ENCODE measurements at regions of chr10 and their contacts with region 1.

Region 1: DNA sequence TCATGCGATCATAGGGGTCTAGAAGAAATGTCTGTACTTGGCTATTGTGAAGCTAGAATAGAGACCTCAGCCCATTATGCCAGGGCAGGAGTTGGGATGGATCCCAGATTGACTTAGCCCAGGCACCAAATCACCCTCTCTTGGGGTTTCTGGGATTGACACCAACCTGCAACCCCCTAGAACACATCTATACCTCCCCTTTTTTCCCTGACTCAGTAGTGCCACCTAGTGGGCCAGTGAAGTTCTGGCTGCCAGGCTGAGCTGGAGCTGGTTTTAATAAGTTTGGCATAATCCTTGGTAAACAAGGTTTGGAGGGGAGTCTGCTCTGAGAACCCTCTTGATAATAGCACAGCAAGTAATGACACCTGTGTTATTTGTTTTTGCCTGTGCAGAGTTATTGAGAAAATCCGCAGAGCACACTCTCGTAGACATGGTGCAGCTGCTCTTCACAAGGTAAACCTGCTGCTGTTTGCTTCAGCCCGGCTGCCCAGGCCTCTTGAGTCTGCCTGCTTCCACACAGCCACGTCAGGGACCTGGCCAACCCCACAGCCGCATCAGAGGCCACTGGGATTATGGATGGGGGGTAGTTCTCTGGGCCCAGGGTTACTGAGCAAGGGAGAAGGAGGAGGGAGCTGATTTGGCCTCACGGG is 43.3 kb upstream of the NFKB2 start:
- DNase-seq: peak; percentile 73
- H3K4me3 Mint-ChIP-seq: no peak overlapping the region
- H3K27ac Mint-ChIP-seq: no peak overlapping the region
- H3K4me1 Mint-ChIP-seq: peaks cover 4% of the 10 kb centered on the region
- H3K27me3 Mint-ChIP-seq: no peaks in the 10 kb centered on the region

Region 2: GRCh38 chr10:102237711-102238252 is 114.4 kb before region 1 on chr10:
- CTCF ChIA-PET with region 1: interaction called, 593 read pairs
- POLR2A ChIA-PET with region 1: interaction called, 3 read pairs
- DNase-seq: no peak
- H3K4me3 Mint-ChIP-seq: no peak overlapping the region
- H3K27ac Mint-ChIP-seq: no peak overlapping the region
- H3K4me1 Mint-ChIP-seq: peaks cover 17% of the 10 kb centered on the region
- H3K27me3 Mint-ChIP-seq: peaks cover 53% of the 10 kb centered on the region

Region 3: DNA sequence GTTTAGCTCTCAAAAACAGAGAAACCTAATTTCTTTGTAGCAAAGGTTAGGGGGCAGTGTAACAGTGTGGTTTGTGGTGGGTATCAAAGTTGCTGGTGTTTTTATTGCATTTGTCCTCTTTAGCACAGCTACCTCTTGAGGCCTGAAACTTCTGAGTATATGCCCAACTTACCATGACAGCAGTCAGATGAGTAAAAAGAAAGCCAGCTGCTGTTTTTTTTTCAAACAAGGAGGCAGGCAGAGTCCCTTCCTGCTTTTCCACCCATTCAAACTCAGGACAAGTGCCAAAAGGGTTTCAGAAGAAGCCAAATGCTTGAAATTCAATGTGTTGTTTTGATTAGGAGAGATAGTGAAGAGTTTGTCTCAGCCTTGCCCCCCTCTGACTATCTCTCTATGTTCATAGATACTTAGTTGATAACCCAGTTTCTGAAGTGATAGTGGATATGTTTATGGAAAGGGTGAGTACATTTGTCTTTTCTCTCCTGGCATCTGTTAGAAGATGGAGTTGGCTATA is 83.8 kb before region 1 on chr10:
- CTCF ChIA-PET with region 1: interaction called, 14 read pairs
- POLR2A ChIA-PET with region 1: no interaction called
- DNase-seq: no peak
- H3K4me3 Mint-ChIP-seq: no peak overlapping the region
- H3K27ac Mint-ChIP-seq: peak overlapping the region; percentile 45
- H3K4me1 Mint-ChIP-seq: peaks cover 41% of the 10 kb centered on the region
- H3K27me3 Mint-ChIP-seq: no peaks in the 10 kb centered on the region

Region 4: DNA sequence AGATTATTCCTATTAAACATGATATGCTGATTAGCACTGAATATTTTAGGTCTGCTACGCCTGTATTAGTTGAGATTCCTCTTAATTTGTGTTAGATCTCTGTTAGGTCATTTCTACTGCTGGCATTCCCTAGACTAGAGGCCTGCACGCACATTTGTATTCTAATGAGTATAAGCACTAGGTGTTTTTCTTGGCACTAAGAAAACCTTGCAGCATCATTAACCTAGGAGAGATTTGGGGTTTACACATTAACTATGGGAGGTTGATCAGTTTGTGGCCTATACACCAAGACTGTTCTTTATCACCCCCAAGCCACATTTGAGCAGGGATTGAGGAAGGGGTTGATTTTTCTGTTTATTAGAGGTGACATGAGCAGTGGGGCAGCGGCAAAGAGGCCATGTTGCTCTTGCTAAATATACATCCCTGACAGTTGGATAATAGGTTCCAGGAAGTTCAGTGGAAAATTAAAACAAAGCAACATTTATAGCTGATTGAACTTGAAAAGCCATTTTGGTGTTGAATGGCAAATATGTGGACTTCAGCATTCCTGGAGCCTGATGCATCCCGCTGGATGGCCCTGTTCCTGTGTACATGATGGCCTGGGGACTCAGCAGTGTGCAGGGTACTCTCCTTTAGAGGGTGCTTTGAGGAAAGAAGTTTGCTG is 41.7 kb before region 1 on chr10:
- CTCF ChIA-PET with region 1: interaction called, 27 read pairs
- POLR2A ChIA-PET with region 1: no interaction called
- DNase-seq: no peak
- H3K4me3 Mint-ChIP-seq: no peak overlapping the region
- H3K27ac Mint-ChIP-seq: no peak overlapping the region
- H3K4me1 Mint-ChIP-seq: peaks cover 17% of the 10 kb centered on the region
- H3K27me3 Mint-ChIP-seq: no peaks in the 10 kb centered on the region

Region 5: DNA sequence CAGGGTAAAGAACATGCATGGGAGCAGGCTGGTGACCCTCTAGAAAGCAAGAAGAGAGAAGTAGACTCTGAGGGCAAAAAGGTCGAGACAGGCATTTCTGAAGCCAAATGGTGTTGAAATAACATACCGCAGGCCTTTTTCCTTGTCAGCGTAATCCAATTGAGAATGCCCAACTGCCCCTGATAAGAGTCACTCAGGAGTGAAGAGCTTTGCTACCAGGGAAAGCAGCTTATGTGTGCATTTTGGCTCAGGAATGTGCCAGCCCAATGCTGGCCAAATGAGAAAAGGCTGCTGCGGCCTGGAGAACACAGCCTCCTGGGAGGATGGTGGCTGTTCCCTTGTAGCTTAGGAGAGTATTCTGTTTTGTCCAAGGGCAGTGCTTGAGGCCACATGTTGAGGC is 18.1 kb before region 1 on chr10:
- CTCF ChIA-PET with region 1: interaction called, 10 read pairs
- POLR2A ChIA-PET with region 1: interaction called, 3 read pairs
- DNase-seq: no peak
- H3K4me3 Mint-ChIP-seq: no peak overlapping the region
- H3K27ac Mint-ChIP-seq: no peak overlapping the region
- H3K4me1 Mint-ChIP-seq: peaks cover 10% of the 10 kb centered on the region
- H3K27me3 Mint-ChIP-seq: no peaks in the 10 kb centered on the region

Region 6: GRCh38 chr10:102375250-102375649 is 23.1 kb after region 1 on chr10:
- CTCF ChIA-PET with region 1: interaction called, 15 read pairs
- POLR2A ChIA-PET with region 1: no interaction called
- DNase-seq: no peak
- H3K4me3 Mint-ChIP-seq: no peak overlapping the region
- H3K27ac Mint-ChIP-seq: no peak overlapping the region
- H3K4me1 Mint-ChIP-seq: no peaks in the 10 kb centered on the region
- H3K27me3 Mint-ChIP-seq: no peaks in the 10 kb centered on the region

Region 7: GRCh38 chr10:102432162-102432950 is 80.2 kb after region 1 on chr10 and contains the start of gene CUEDC2:
- CTCF ChIA-PET with region 1: no interaction called
- POLR2A ChIA-PET with region 1: no interaction called
- DNase-seq: peak; percentile 98
- H3K4me3 Mint-ChIP-seq: peak within 1 kb of the TSS; percentile 88
- H3K27ac Mint-ChIP-seq: peak within 1 kb of the TSS; percentile 82
- H3K4me1 Mint-ChIP-seq: peaks cover 55% of the 10 kb centered on the region
- H3K27me3 Mint-ChIP-seq: no peaks in the 10 kb centered on the region
- total RNA-seq, gene CUEDC2: 60.9 to 64.5 TPM

Region 8: GRCh38 chr10:102444851-102445250 is 92.7 kb after region 1 on chr10:
- CTCF ChIA-PET with region 1: no interaction called
- POLR2A ChIA-PET with region 1: no interaction called
- DNase-seq: no peak
- H3K4me3 Mint-ChIP-seq: no peak overlapping the region
- H3K27ac Mint-ChIP-seq: no peak overlapping the region
- H3K4me1 Mint-ChIP-seq: peaks cover 22% of the 10 kb centered on the region
- H3K27me3 Mint-ChIP-seq: no peaks in the 10 kb centered on the region

Region 9: GRCh38 chr10:102467971-102468438 is 115.8 kb after region 1 on chr10:
- CTCF ChIA-PET with region 1: no interaction called
- POLR2A ChIA-PET with region 1: no interaction called
- DNase-seq: no peak
- H3K4me3 Mint-ChIP-seq: no peak overlapping the region
- H3K27ac Mint-ChIP-seq: no peak overlapping the region
- H3K4me1 Mint-ChIP-seq: peaks cover 14% of the 10 kb centered on the region
- H3K27me3 Mint-ChIP-seq: no peaks in the 10 kb centered on the region

Region 10: GRCh38 chr10:102492983-102493382 is 140.8 kb after region 1 on chr10:
- CTCF ChIA-PET with region 1: no interaction called
- POLR2A ChIA-PET with region 1: no interaction called
- DNase-seq: no peak
- H3K4me3 Mint-ChIP-seq: no peak overlapping the region
- H3K27ac Mint-ChIP-seq: no peak overlapping the region
- H3K4me1 Mint-ChIP-seq: peaks cover 19% of the 10 kb centered on the region
- H3K27me3 Mint-ChIP-seq: no peaks in the 10 kb centered on the region

Measured in activated CD4-positive, alpha-beta memory T cell treated with anti-CD3 and anti-CD28 coated beads, Interleukin-2, amount 10 ng/mL, durations not matched to agents 7 days and 5 days (primary cell).